Natural killer cell (primary cell): ENCODE measurements at regions of chr17 and their contacts with region 1.

Region 1: GRCh38 chr17:21457051-21458026 is 81.2 kb downstream of the KCNJ12 start:
- DNase-seq: peak; percentile 93 to 94
- ATAC-seq: peak; percentile 91 to 96 (median 93)
- H3K4me3 ChIP-seq: no peak overlapping the region
- H3K4me3 Mint-ChIP-seq: no peak overlapping the region
- H3K27ac ChIP-seq: no peak overlapping the region
- H3K27ac Mint-ChIP-seq: peak overlapping the region in 1 of 2 donors; percentile 84
- H3K4me1 ChIP-seq: peaks cover 17% of the 10 kb centered on the region
- H3K4me1 Mint-ChIP-seq: peaks cover 7 to 28% of the 10 kb centered on the region in 2 donors
- H3K27me3 ChIP-seq: no peaks in the 10 kb centered on the region
- H3K27me3 Mint-ChIP-seq: peaks cover 0 to 15% of the 10 kb centered on the region in 2 donors
- CTCF ChIP-seq: peak; percentile 96

Region 2: DNA sequence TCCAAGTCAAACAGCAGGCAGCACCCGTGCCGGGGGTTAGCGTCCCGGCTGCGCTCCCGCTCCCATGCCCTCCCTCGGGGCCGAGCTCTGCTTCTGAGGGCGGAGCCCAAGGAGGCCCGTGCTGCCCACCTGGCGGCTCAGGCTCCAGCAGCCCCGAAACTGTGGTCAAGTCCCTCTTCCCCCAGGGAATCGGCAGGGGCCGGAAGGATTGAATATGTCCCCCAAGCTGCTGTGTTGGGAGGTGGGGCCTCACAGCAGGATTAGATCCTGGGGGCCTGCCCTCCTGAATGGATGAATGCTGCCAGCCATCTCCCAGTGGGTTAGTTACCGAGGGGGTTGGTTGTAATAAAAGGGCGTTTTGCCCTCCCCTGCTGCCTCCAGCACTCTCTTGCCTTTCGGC is 138.9 kb before region 1 on chr17:
- intact Hi-C with region 1: loop called (anchors 1 kb)
- DNase-seq: no peak
- ATAC-seq: no peak
- H3K4me3 ChIP-seq: no peak overlapping the region
- H3K4me3 Mint-ChIP-seq: no peak overlapping the region
- H3K27ac ChIP-seq: no peak overlapping the region
- H3K27ac Mint-ChIP-seq: no peak overlapping the region
- H3K4me1 ChIP-seq: peaks cover 12% of the 10 kb centered on the region
- H3K4me1 Mint-ChIP-seq: peaks cover 0 to 7% of the 10 kb centered on the region in 2 donors
- H3K27me3 ChIP-seq: no peaks in the 10 kb centered on the region
- H3K27me3 Mint-ChIP-seq: peaks cover 0 to 2% of the 10 kb centered on the region in 2 donors
- CTCF ChIP-seq: no peak